GM12878 (cell line): ENCODE measurements at regions of chr7 and their contacts with region 1.

Region 1: DNA sequence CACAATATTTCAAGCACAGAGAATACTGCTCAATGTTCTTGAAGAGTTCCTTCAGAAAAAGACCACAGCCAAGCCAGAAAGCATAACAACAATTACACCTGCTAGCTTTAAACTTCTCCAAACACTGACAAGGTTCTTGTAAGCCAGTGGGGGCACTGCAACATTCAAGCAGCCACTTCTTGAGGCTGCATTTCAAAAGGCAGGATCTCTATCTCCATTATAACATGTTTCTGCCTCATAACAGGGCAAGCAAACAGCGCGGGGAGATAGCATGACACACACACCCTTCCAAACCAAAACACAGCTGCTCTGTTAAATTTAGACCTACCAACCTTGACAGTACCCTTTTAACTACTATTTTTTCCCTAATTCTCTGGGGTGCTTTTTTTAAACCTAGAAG is 30.8 kb downstream of the CHCHD3 start:
- DNase-seq: no peak
- ATAC-seq: peak; percentile 74
- H3K4me3 ChIP-seq: no peak overlapping the region
- H3K27ac ChIP-seq: no peak overlapping the region
- H3K4me1 ChIP-seq: peaks cover 11% of the 10 kb centered on the region; the same call in 1 of the 2 replicates
- H3K27me3 ChIP-seq: no peaks in the 10 kb centered on the region
- CTCF ChIP-seq: peak; percentile 22 to 40 (median 34); a peak in 3 of 6 replicates
- EP300 ChIP-seq: no peak
- POLR2A ChIP-seq: no peak
- RAD21 ChIP-seq: peak; percentile 45

Region 2: GRCh38 chr7:133036289-133036688 is 14.8 kb before region 1 on chr7:
- CTCF ChIA-PET with region 1: interaction called, 9 read pairs
- POLR2A ChIA-PET with region 1: interaction called, 3 read pairs
- RAD21 ChIA-PET with region 1: interaction called, 3 read pairs
- SMC1A ChIA-PET with region 1: interaction called, 18 read pairs
- in situ Hi-C with region 1: no loop called
- intact Hi-C with region 1: loop called (anchors 1 kb)
- DNase-seq: no peak
- ATAC-seq: no peak
- H3K4me3 ChIP-seq: no peak overlapping the region
- H3K27ac ChIP-seq: no peak overlapping the region
- H3K4me1 ChIP-seq: peaks cover 6% of the 10 kb centered on the region
- H3K27me3 ChIP-seq: no peaks in the 10 kb centered on the region
- CTCF ChIP-seq: no peak
- EP300 ChIP-seq: no peak
- POLR2A ChIP-seq: no peak
- RAD21 ChIP-seq: no peak

Region 3: GRCh38 chr7:133401225-133401624 is 350.2 kb after region 1 on chr7:
- CTCF ChIA-PET with region 1: no interaction called
- POLR2A ChIA-PET with region 1: interaction called, 10 read pairs
- RAD21 ChIA-PET with region 1: no interaction called
- SMC1A ChIA-PET with region 1: no interaction called
- in situ Hi-C with region 1: no loop called
- intact Hi-C with region 1: no loop called
- DNase-seq: no peak
- ATAC-seq: no peak
- H3K4me3 ChIP-seq: no peak overlapping the region
- H3K27ac ChIP-seq: no peak overlapping the region
- H3K4me1 ChIP-seq: no peaks in the 10 kb centered on the region
- H3K27me3 ChIP-seq: no peaks in the 10 kb centered on the region
- CTCF ChIP-seq: no peak
- EP300 ChIP-seq: no peak
- POLR2A ChIP-seq: no peak
- RAD21 ChIP-seq: no peak

Region 4: DNA sequence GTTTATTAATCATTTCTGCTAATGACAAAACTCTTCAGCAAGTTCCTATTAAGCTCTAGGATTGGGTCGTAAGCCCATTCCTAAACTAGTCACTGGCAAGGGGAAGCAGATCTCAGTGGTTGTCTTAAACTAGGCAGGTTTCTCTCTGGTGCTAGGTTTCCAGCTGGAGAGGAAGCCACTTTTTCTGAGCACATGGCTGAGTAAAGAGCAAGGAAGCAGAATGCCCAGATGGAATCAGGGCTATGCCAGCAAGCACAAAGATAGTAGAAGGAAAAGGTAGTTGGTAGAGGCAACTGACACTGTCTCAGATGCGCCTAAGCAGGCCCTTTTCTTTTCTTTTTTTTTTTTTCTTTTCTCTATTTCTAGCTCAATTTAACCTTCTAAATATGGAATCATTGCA is 426.7 kb after region 1 on chr7:
- CTCF ChIA-PET with region 1: no interaction called
- POLR2A ChIA-PET with region 1: no interaction called
- RAD21 ChIA-PET with region 1: no interaction called
- SMC1A ChIA-PET with region 1: no interaction called
- in situ Hi-C with region 1: no loop called
- intact Hi-C with region 1: no loop called
- DNase-seq: no peak
- ATAC-seq: no peak
- H3K4me3 ChIP-seq: no peak overlapping the region
- H3K27ac ChIP-seq: no peak overlapping the region
- H3K4me1 ChIP-seq: no peaks in the 10 kb centered on the region
- H3K27me3 ChIP-seq: no peaks in the 10 kb centered on the region
- CTCF ChIP-seq: no peak
- EP300 ChIP-seq: no peak
- POLR2A ChIP-seq: no peak
- RAD21 ChIP-seq: no peak